Colonic mucosa (tissue), 4 donors: ENCODE measurements at regions of chr9 and their contacts with region 1.

Region 1: DNA sequence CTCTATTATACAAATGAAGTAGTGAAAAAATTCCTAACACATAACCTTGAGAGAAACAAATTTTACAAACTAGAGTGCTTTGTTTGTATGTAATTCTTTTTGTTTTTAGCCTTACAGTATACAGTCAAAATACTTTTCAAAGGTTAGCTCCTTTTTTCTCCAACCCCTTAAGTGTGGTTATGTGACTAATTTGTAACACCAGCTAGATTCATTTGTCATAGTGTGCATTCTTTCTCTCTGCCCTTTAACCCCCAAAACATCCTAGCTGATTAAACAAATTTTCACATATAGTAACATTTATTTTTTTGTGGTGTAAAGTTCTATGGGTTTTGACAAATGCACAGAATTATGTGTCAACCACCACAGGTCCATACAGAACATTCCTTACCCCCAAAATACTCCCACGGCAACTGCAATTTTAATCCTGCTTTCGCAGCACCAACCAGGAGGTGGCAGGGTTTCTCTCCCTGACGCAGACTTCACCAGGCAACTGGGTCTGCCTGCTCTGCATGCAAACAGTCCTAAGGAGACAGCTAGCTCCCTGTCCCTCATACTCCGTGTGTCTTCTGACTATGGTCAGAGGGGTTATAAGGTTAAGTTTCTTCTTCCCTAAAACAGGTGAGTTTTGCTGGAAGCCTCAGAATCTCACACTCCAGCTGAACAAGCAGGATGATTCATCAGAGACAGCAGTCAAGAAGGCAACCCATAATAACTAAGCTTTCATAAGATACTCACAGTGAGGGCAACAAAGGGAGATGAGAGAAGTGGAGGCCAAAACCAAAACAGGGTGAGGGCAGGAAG is 44.5 kb upstream of the NR5A1 start:
- DNase-seq: peak; percentile 51
- H3K4me3 ChIP-seq: no peak overlapping the region
- H3K27ac ChIP-seq: no peak overlapping the region
- H3K4me1 ChIP-seq: no peaks in the 10 kb centered on the region
- H3K27me3 ChIP-seq: no peaks in the 10 kb centered on the region
- CTCF ChIP-seq: peak; percentile 43

Region 2: GRCh38 chr9:124617471-124618141 is 65.9 kb after region 1 on chr9:
- intact Hi-C with region 1: loop called (anchors 5 kb)
- DNase-seq: peak; percentile 85
- H3K4me3 ChIP-seq: no peak overlapping the region
- H3K27ac ChIP-seq: no peak overlapping the region
- H3K4me1 ChIP-seq: no peaks in the 10 kb centered on the region
- H3K27me3 ChIP-seq: no peaks in the 10 kb centered on the region
- CTCF ChIP-seq: peak; percentile 78